GM12878 (cell line): ENCODE measurements at regions of chr1 and their contacts with region 1.

Region 1: GRCh38 chr1:5514519-5515183 is 477.6 kb downstream of the NPHP4 start:
- DNase-seq: no peak
- ATAC-seq: peak; percentile 89
- H3K4me3 ChIP-seq: no peak overlapping the region
- H3K27ac ChIP-seq: no peak overlapping the region
- H3K4me1 ChIP-seq: no peaks in the 10 kb centered on the region
- H3K27me3 ChIP-seq: no peaks in the 10 kb centered on the region; a peak in 1 of 4 replicates
- CTCF ChIP-seq: peak; percentile 92 to 99 (median 99)
- EP300 ChIP-seq: no peak
- POLR2A ChIP-seq: no peak
- RAD21 ChIP-seq: peak; percentile 46

Region 2: DNA sequence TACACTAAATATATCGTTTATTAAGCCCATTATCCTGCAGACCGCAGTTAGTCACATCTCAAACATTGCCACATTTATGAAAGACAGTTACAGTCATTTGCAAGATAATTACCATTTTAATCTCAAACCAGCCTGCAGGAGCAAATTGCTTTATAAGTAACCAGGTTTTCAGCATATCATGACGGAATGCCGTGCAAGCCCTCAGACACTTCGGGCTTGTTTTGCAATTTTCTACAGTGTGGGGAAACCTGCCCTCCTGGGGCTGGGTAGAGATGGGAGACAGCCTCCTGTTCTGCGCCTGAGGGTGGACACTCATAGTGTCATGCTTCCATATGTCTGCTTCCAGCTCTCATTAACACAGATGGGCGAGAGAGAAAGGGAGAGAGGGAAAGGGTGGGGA is 86.3 kb before region 1 on chr1:
- CTCF ChIA-PET with region 1: no interaction called
- POLR2A ChIA-PET with region 1: no interaction called
- RAD21 ChIA-PET with region 1: no interaction called
- SMC1A ChIA-PET with region 1: no interaction called
- in situ Hi-C with region 1: no loop called
- intact Hi-C with region 1: no loop called
- DNase-seq: no peak
- ATAC-seq: no peak
- H3K4me3 ChIP-seq: no peak overlapping the region
- H3K27ac ChIP-seq: no peak overlapping the region
- H3K4me1 ChIP-seq: no peaks in the 10 kb centered on the region
- H3K27me3 ChIP-seq: no peaks in the 10 kb centered on the region; a peak in 1 of 4 replicates
- CTCF ChIP-seq: no peak
- EP300 ChIP-seq: no peak
- POLR2A ChIP-seq: no peak
- RAD21 ChIP-seq: no peak

Region 3: DNA sequence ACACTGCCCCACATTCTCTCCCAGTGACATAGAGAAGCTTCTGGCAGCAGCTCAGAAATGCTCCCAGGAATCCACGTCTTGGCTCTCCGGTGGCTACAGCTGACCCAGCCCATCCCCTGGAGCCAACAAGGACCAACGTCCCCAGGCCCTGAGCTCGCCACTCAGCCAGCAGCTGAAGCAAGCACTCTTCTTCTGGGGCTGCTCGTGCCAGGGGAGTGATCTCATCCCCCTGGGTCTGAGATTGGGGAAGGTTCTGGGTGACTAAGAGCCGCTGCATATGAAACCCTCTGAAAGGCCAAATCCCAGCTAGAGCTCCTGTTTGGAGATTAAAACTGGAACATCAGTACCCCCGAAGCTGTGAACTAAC is 10.3 kb before region 1 on chr1:
- CTCF ChIA-PET with region 1: interaction called, 13 read pairs
- POLR2A ChIA-PET with region 1: no interaction called
- RAD21 ChIA-PET with region 1: no interaction called
- SMC1A ChIA-PET with region 1: no interaction called
- in situ Hi-C with region 1: no loop called
- intact Hi-C with region 1: no loop called
- DNase-seq: no peak
- ATAC-seq: no peak
- H3K4me3 ChIP-seq: no peak overlapping the region
- H3K27ac ChIP-seq: no peak overlapping the region
- H3K4me1 ChIP-seq: no peaks in the 10 kb centered on the region
- H3K27me3 ChIP-seq: no peaks in the 10 kb centered on the region
- CTCF ChIP-seq: no peak
- EP300 ChIP-seq: no peak
- POLR2A ChIP-seq: no peak
- RAD21 ChIP-seq: no peak

Region 4: DNA sequence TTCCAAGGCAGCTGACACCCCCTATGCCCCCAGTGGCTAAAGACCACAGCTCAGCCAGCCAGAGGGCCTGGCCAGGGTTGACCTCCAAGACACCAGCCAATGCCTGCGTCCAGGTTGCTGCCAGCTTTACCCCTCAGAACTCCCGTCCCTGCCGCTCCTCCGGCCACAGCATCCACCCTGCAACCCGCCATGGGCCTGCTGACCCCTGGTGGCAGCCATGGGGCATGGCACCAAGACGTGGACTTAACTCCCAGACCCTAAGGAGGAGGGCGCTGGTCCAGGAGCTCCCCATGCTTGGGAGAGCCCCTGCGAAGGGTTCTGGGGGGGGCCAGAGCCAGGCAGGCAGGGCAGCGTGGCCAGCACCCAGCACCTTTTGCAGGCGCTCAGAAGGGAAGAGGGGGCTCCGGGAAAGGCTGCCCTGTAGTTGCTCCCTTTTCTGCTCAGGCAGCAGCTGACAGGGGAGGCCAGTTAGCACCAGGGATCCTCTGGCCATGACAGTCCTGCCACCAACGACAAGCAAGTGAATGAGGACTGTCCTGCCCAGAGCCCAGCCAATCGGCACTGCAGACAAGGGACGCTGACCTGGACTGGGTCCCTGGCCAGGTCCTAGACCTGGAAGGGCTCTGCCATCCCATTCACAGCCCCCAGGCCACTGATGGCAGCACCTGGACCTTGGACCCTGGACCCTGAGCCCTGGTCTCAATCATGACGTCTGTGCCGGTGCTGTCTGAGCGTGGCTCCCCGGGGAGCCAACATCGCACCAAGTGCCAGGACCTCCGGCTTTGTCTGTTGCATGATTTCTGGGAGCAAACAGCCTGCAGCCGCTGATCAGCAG is 231.3 kb after region 1 on chr1:
- CTCF ChIA-PET with region 1: interaction called, 22 read pairs
- POLR2A ChIA-PET with region 1: no interaction called
- RAD21 ChIA-PET with region 1: interaction called, 4 read pairs
- SMC1A ChIA-PET with region 1: no interaction called
- in situ Hi-C with region 1: loop called (anchors 5 kb)
- intact Hi-C with region 1: loop called (anchors 2 kb)
- DNase-seq: no peak
- ATAC-seq: peak; percentile 98
- H3K4me3 ChIP-seq: no peak overlapping the region
- H3K27ac ChIP-seq: no peak overlapping the region
- H3K4me1 ChIP-seq: no peaks in the 10 kb centered on the region
- H3K27me3 ChIP-seq: peaks cover 0 to 2% of the 10 kb centered on the region in 2 experiments; a peak in 1 of 4 replicates
- CTCF ChIP-seq: peak; percentile 94 to 97 (median 96)
- EP300 ChIP-seq: no peak
- POLR2A ChIP-seq: no peak
- RAD21 ChIP-seq: peak; percentile 86

Region 5: DNA sequence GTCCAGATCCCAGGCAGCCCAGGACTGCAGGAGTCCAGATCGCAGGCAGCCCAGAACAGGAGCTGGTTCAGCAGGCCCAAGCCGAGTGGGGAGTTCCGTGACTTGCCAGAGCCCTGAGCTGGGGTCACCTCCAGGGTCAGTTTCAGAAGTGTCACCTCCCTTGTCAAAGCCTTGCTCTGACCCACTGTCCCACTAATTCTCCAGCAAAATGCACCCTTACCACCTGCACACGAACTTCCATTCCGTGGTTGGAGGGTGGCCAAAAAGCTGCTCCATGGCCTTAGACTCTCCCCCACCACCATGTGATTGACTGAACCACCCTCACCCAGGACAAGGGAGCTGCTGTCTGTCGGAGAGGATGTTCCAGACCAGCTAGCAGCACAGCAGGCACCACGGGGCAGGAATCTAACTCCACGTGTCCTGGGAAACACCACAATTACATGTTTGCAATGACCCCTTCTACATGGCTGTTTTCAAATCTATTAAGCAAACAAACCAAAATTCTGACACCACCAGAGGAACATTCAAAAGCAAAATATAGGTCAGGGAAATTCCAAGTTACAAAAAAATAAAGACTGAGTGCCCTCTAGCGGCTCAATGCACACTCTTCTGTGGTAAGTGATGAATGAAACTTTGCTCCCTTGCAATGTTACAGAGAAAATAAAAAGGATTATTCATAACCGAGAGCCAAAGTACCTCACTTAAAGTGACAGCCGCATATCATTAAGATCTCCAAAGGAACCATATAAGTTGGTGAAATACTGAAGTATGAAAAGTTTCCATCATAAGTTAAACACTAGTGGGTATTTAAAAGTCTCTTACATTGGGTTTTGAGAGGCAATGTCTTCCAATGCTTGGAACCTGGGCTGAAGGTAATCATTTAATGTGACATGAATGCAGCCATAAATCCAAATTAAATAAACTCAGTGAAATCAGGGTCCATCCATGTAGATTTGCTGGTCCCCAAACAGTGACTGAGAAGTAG is 401.2 kb after region 1 on chr1:
- CTCF ChIA-PET with region 1: interaction called, 30 read pairs
- POLR2A ChIA-PET with region 1: no interaction called
- RAD21 ChIA-PET with region 1: interaction called, 5 read pairs
- SMC1A ChIA-PET with region 1: interaction called, 6 read pairs
- in situ Hi-C with region 1: loop called (anchors 5 kb)
- intact Hi-C with region 1: loop called (anchors 2 kb)
- DNase-seq: peak; percentile 5
- ATAC-seq: peak; percentile 94
- H3K4me3 ChIP-seq: no peak overlapping the region
- H3K27ac ChIP-seq: 0 out of 2 replicates have a peak overlapping the region, but pooled peaks have one; percentile 8
- H3K4me1 ChIP-seq: peaks cover 4% of the 10 kb centered on the region
- H3K27me3 ChIP-seq: no peaks in the 10 kb centered on the region
- CTCF ChIP-seq: peak; percentile 65 to 82 (median 70); a peak in 5 of 6 replicates
- EP300 ChIP-seq: no peak
- POLR2A ChIP-seq: no peak
- RAD21 ChIP-seq: peak; percentile 67

Region 6: GRCh38 chr1:5975133-5975880 is 460.7 kb after region 1 on chr1:
- CTCF ChIA-PET with region 1: no interaction called
- POLR2A ChIA-PET with region 1: no interaction called
- RAD21 ChIA-PET with region 1: interaction called, 4 read pairs
- SMC1A ChIA-PET with region 1: no interaction called
- in situ Hi-C with region 1: no loop called
- intact Hi-C with region 1: loop called (anchors 2 kb)
- DNase-seq: no peak
- ATAC-seq: peak; percentile 72
- H3K4me3 ChIP-seq: no peak overlapping the region
- H3K27ac ChIP-seq: no peak overlapping the region
- H3K4me1 ChIP-seq: no peaks in the 10 kb centered on the region
- H3K27me3 ChIP-seq: no peaks in the 10 kb centered on the region
- CTCF ChIP-seq: peak; percentile 57 to 64 (median 62)
- EP300 ChIP-seq: no peak
- POLR2A ChIP-seq: no peak
- RAD21 ChIP-seq: peak; percentile 72

Region 7: DNA sequence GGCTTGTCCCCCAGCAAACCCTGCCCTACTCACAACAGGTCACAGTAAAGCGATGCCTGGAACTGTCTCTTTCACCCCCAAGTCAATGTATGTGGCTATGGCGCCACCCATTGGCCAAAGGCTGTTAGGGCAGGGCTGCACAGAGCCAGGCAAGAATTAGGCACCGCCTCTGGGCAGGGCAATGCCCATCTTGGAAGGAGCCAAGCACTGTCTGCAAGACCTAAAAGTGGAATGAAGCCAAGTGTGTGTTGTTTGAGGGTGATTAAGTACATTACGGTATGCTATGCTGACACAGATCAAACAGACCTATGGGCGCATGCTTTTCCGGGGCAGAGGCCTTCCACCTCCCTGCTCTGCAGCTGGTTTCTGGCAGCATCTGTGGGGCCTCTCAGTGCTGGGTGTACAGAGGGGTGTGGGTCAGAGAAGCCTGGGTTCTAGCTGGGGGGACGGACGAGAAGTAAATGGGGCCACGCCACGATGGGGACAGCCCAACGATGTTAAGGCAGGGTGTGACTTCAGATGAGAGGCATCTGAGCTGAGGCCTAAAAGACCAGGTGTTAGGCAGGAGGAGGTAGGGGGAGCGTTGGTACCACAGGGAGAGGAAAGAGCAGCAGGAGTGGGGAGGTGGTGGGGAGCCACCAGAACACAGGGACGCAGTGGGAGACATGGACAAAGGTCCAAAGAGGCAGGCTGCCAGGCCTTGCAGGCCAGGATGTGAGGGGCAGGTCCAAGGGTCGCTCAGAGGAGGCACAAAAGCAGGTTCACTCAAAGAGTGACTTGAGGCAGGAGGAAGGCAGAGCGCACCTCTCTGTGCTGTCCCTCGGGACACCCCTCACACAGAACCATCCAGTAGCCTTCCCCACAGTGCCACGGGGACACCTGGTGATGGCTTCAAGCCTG is 829.1 kb after region 1 on chr1:
- CTCF ChIA-PET with region 1: no interaction called
- POLR2A ChIA-PET with region 1: no interaction called
- RAD21 ChIA-PET with region 1: no interaction called
- SMC1A ChIA-PET with region 1: no interaction called
- in situ Hi-C with region 1: loop called (anchors 25 kb)
- intact Hi-C with region 1: no loop called
- DNase-seq: no peak
- ATAC-seq: peak; percentile 94
- H3K4me3 ChIP-seq: no peak overlapping the region
- H3K27ac ChIP-seq: no peak overlapping the region
- H3K4me1 ChIP-seq: peaks cover 6% of the 10 kb centered on the region; the same call in 1 of the 2 replicates
- H3K27me3 ChIP-seq: no peaks in the 10 kb centered on the region
- CTCF ChIP-seq: peak; percentile 85 to 99 (median 87); a peak in 5 of 6 replicates
- EP300 ChIP-seq: no peak
- POLR2A ChIP-seq: no peak
- RAD21 ChIP-seq: peak; percentile 97